ENCODE measurements at regions of chr5 and their contacts with region 1.

Region 1: GRCh38 chr5:67246108-67246507 is 49.5 kb upstream of the CD180 start:
- DNase-seq: peak; percentile 70
- ATAC-seq: peak; percentile 28; the same call in 1 of the 2 replicates
- H3K4me3 ChIP-seq: no peak overlapping the region
- H3K27ac ChIP-seq: no peak overlapping the region
- H3K4me1 ChIP-seq: no peaks in the 10 kb centered on the region
- H3K27me3 ChIP-seq: no peaks in the 10 kb centered on the region
- CTCF ChIP-seq: peak; percentile 79

Region 2: DNA sequence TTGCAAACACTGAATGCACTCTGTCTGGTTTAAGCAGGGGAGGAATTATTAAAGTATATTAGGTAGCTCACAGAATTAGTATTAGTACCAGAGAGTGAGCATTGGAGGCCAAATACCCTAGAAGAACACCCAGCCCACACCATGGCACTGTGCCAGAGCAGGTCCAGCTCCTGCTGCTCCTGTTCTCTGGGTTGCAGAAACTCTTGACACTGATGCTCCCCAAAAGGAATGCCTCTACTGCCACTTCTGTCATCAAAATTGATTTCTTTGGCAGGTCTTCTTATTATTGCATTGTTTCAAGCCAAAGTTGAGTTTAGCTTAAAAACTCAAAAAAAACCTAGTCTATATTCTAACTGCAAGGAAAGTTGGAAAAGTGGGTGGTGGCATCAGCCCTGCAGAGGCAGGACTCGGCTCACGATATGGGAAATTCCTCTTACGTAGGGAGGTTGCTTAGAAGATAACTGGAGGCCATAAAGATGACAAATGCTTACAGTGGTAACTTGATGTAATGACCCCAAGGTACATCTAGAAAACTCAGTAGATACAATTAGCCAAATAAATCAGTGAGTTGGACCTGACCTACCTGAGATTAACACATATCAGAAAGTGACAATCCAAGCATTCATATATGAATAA is 172.9 kb before region 1 on chr5:
- CTCF ChIA-PET with region 1: no interaction called
- POLR2A ChIA-PET with region 1: no interaction called
- intact Hi-C with region 1: no loop called
- DNase-seq: no peak
- ATAC-seq: no peak
- H3K4me3 ChIP-seq: no peak overlapping the region
- H3K27ac ChIP-seq: no peak overlapping the region
- H3K4me1 ChIP-seq: no peaks in the 10 kb centered on the region
- H3K27me3 ChIP-seq: no peaks in the 10 kb centered on the region
- CTCF ChIP-seq: no peak

Region 3: GRCh38 chr5:67206937-67207336 is 39.2 kb before region 1 on chr5:
- CTCF ChIA-PET with region 1: no interaction called
- POLR2A ChIA-PET with region 1: no interaction called
- intact Hi-C with region 1: no loop called
- DNase-seq: peak; percentile 97
- ATAC-seq: peak; percentile 88
- H3K4me3 ChIP-seq: no peak overlapping the region
- H3K27ac ChIP-seq: peak overlapping the region; percentile 92
- H3K4me1 ChIP-seq: peaks cover 43% of the 10 kb centered on the region
- H3K27me3 ChIP-seq: no peaks in the 10 kb centered on the region
- CTCF ChIP-seq: no peak

Region 4: DNA sequence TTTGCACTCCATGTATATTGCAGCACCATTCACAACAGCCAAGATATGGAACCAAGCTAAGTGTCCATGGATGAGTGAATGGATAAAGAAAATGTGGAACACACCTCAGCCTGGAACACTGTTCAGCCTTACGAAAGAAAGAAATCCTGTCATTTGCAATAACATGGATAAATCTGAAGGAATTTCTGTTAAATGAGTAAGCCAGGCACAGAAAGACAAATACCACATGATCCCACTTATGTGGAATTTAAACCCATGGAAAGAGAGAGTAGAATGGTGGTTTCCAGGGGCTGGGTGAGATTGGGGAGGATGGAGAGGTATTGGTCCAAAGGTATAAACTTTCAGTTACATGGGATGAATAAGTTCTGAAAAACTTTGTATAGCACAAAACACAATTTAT is 179.4 kb after region 1 on chr5:
- CTCF ChIA-PET with region 1: no interaction called
- POLR2A ChIA-PET with region 1: no interaction called
- intact Hi-C with region 1: no loop called
- DNase-seq: no peak
- ATAC-seq: no peak
- H3K4me3 ChIP-seq: no peak overlapping the region
- H3K27ac ChIP-seq: no peak overlapping the region
- H3K4me1 ChIP-seq: no peaks in the 10 kb centered on the region
- H3K27me3 ChIP-seq: no peaks in the 10 kb centered on the region
- CTCF ChIP-seq: no peak

Region 5: GRCh38 chr5:68252673-68253623 is 1006.8 kb after region 1 on chr5:
- CTCF ChIA-PET with region 1: interaction called, 6 read pairs
- POLR2A ChIA-PET with region 1: no interaction called
- intact Hi-C with region 1: loop called (anchors 1 kb)
- DNase-seq: peak; percentile 45
- ATAC-seq: peak; percentile 67; the same call in 1 of the 2 replicates
- H3K4me3 ChIP-seq: no peak overlapping the region
- H3K27ac ChIP-seq: no peak overlapping the region
- H3K4me1 ChIP-seq: no peaks in the 10 kb centered on the region
- H3K27me3 ChIP-seq: no peaks in the 10 kb centered on the region
- CTCF ChIP-seq: peak; percentile 58

Region 6: DNA sequence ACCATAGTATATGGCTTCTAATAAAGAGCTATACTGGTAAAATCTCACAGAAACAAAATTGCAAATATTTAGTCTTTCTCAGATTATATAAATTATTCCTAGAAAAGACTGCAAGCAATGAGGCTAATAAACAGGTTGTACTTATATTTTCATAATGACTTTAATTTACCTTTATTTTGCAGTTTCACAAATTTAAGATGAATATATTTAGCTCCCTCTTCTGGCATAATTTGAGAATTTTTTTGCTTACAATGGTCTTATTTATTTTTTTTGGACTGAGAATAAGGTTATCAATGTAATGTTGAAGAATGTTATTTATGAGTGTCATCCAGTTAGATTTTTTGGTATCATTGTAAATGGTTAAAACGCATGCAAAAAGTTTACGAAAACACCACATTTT is 1026.2 kb after region 1 on chr5:
- CTCF ChIA-PET with region 1: no interaction called
- POLR2A ChIA-PET with region 1: no interaction called
- intact Hi-C with region 1: loop called (anchors 5 kb)
- DNase-seq: peak; percentile 39
- ATAC-seq: no peak
- H3K4me3 ChIP-seq: no peak overlapping the region
- H3K27ac ChIP-seq: no peak overlapping the region
- H3K4me1 ChIP-seq: 0 out of 2 replicates have a peak, but pooled peaks cover 7% of the 10 kb centered on the region
- H3K27me3 ChIP-seq: no peaks in the 10 kb centered on the region
- CTCF ChIP-seq: peak; percentile 43; the same call in 1 of the 2 replicates